Left cardiac atrium (tissue), 4 donors: ENCODE measurements at regions of chr19 and their contacts with region 1.

Region 1: GRCh38 chr19:6273701-6274601 is 5.8 kb downstream of the MLLT1 start:
- DNase-seq: peak; percentile 92
- ATAC-seq: peak; percentile 71 to 78

Region 2: DNA sequence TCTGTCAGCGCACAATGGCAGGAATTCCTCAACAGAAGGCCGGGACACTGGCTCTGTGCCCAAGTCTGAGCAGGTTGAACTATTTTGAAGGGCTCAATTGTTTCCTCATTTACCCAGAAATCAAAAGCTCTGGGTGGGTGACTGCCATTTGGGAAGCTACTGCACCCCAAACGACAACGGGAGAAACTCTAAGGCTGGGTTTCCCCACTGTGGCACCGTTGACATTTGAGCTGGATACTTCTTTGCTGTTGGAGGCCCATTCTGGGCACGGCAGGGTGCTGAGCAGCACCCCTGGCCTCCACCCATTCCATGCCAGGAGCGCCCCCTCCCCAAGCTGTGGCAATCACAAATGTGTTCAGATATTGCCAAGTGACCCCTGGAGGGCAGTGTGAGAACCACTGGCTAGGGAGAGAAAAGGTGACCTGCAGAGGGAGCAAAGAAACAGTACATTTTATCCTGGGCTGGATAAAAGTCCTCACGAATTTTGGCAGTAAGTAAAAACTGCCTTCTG is 226.2 kb before region 1 on chr19:
- intact Hi-C with region 1: no loop called
- DNase-seq: no peak
- ATAC-seq: peak; percentile 63 to 64

Region 3: DNA sequence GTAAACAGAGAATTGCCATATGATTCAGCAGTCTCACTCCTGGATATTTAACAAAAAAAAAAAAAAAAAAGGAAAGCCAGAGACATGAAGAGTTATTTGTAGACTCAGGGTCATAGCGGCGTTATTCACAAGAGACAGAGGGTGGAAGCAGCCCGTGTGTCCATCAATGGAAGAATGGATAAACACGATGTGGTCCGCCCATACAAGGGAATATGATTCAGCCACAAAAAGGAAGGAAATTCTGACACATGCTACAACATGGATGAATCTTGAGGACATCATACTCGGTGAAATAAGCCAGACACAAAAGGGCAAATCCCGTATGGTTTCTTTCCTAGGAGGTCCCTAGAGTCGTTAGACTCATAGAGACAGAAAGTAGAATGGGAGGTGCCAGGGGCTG is 123.7 kb before region 1 on chr19:
- intact Hi-C with region 1: no loop called
- DNase-seq: no peak
- ATAC-seq: no peak

Region 4: GRCh38 chr19:6204212-6204611 is 69.7 kb before region 1 on chr19:
- intact Hi-C with region 1: no loop called
- DNase-seq: no peak
- ATAC-seq: no peak

Region 5: DNA sequence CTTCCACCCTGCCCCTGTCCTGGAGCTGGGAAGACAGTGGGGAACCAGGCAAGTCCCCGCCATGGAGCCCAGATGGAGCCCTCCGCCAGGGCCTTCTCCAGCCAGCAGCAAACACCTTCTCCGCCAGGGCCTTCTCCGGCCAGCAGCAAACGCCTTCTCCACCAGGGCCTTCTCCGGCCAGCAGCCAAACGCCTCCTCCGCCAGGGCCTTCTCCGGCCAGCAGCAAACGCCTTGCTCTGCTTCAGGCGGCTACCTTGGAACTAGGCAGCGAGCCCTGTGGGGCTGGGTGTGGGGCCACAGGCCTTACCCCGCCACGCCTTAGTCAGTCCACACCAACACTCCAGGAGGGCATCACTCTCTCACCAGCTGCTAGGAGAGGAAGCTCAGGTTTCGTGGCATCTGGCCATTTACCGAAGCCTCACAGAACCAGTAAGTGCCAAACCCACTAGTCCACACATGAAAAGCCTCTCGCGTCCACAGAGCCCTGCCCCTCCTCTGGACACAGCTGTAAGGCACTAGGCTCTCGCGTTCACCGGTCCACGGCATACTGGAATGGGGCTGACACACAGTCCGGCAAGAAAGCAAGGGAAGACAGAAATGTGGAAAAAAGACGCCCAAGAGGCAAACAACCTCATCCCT is 35.2 kb before region 1 on chr19:
- intact Hi-C with region 1: loop called in 1 of 2 experiments (anchors 5 kb)
- DNase-seq: peak; percentile 74
- ATAC-seq: peak; percentile 69 to 78

Region 6: DNA sequence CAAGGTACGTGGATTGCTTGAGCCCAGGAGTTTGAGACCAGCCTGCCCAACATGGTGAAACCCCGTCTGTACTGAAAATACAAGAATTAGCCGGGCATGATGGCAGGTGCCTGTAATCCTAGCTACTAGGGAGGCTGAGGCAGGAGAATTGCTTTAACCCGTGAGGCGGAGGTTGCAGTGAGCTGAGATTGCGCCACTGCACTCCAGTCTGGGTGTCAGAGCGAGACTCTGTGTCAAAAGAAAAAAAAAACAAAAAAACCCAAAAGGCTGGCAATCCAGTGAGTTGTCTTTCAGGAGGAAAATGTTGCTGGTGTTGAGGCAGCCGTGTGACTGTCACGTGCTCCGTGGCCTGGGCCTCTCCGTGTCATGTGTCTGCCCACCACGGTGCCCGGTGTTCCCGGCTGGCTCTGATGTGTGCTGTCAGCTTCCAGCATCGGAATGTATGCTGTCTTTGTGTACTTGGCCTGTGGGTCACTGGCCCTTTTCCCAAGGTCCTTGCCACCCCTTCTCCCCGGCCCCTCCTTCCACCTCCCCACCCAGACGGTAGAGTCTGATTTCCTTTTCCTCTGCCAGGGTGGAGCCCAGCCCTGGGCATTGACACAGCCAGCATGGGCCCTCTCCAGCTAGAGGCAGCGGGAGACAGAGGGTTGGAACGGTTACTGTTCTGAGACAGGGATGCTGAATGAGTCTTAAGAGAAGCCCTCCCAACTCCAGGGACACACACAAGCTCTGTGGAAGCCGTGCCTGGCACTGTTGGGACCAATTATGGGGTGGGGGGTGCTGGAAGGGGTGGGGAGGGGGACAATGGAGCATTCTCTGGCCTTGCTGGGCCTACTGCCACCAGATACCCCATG is 235.4 kb after region 1 on chr19:
- intact Hi-C with region 1: no loop called
- DNase-seq: no peak
- ATAC-seq: peak in 1 of 2 donors; percentile 34